Activated CD4-positive, alpha-beta T cell treated with anti-CD3 and anti-CD28 coated beads for 36 hours (primary cell): ENCODE measurements at regions of chr10 and their contacts with region 1.

Region 1: GRCh38 chr10:104268716-104269645 is at the start of gene GSTO2:
- DNase-seq: peak; percentile 99
- ATAC-seq: peak; percentile 90
- H3K4me3 Mint-ChIP-seq: peak within 1 kb of the TSS; percentile 77
- H3K27ac Mint-ChIP-seq: peak within 1 kb of the TSS; percentile 94
- H3K4me1 Mint-ChIP-seq: peaks cover 42% of the 10 kb centered on the region
- H3K27me3 Mint-ChIP-seq: no peaks in the 10 kb centered on the region
- total RNA-seq, gene GSTO2: 2.1 to 2.8 TPM

Region 2: GRCh38 chr10:103396064-103396788 is 872.8 kb before region 1 on chr10 and contains the starts of genes ATP5MK and PDCD11:
- CTCF ChIA-PET with region 1: no interaction called
- POLR2A ChIA-PET with region 1: no interaction called
- intact Hi-C with region 1: loop called in 1 of 2 experiments (anchors 2 kb)
- DNase-seq: peak; percentile 98
- ATAC-seq: peak; percentile 100
- H3K4me3 Mint-ChIP-seq: peak within 1 kb of the TSS; percentile 99
- H3K27ac Mint-ChIP-seq: peak within 1 kb of the TSS; percentile 95
- H3K4me1 Mint-ChIP-seq: peaks cover 57% of the 10 kb centered on the region
- H3K27me3 Mint-ChIP-seq: no peaks in the 10 kb centered on the region
- total RNA-seq, gene ATP5MK: 377 to 447 TPM
- total RNA-seq, gene PDCD11: 60.6 to 73.8 TPM

Region 3: DNA sequence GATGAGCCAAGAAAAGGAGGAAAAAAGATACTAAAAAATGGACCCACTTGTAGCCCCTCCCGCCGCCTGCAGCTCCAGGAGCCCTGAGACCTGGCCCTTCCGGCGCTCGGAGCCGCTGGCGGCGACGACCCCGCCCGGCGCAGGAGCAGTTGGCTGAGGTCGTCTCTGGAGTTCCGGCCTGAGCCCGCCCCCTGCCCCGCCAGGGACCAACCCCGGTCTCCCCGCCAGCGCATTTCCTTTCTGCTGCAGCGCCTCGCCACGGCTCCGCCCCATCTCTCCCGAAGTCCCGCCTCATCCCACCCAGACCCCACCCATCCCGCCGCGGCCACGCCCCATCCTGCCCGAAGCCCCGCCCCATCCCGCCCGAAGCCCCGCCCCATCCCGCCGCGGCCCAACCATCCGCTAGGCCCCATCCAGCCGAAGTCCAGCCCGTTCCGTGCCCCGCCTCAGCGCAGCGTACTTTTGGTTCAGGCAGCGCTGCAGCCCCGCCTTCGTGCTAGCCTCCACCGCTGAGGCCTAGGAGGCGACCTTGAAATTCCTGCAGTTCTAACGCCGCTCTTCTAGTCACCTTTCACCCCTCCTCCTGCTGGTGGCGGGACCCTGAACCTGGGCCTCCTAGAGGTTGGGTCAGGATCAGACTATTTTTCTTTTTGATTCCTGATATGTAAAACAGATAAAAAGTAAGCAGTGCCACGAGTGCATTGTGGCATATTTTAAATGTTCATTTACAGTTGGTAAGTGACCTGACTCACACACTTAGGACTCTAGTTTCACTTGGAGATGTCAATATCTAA is 350.7 kb before region 1 on chr10 and contains the start of gene STN1:
- CTCF ChIA-PET with region 1: no interaction called
- POLR2A ChIA-PET with region 1: no interaction called
- intact Hi-C with region 1: loop called (anchors 1 to 2 kb)
- DNase-seq: peak; percentile 98
- ATAC-seq: peak; percentile 93
- H3K4me3 Mint-ChIP-seq: peak within 1 kb of the TSS; percentile 96
- H3K27ac Mint-ChIP-seq: peak within 1 kb of the TSS; percentile 99
- H3K4me1 Mint-ChIP-seq: peaks cover 32% of the 10 kb centered on the region
- H3K27me3 Mint-ChIP-seq: no peaks in the 10 kb centered on the region
- total RNA-seq, gene STN1: 34.4 to 37.4 TPM

Region 4: DNA sequence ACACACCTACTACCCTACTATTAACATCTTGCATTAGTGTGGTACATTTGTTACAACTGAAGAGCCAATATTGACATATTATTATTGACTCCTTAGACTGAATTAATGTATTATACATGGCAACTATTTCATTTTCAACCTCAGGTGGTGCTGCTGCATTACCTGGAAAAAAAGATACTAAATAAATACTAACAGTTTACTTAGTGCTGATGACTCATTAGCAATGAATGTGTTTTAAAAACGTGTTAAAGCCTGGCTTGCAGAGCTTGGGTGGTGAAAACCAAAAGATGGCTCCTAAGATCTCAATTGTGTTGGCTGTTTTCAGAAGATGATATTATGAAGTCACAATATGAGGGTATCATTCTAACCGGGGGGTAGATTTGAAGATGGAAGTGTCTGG is 71.6 kb before region 1 on chr10:
- CTCF ChIA-PET with region 1: no interaction called
- POLR2A ChIA-PET with region 1: no interaction called
- intact Hi-C with region 1: no loop called
- DNase-seq: no peak
- ATAC-seq: no peak
- H3K4me3 Mint-ChIP-seq: no peak overlapping the region
- H3K27ac Mint-ChIP-seq: no peak overlapping the region
- H3K4me1 Mint-ChIP-seq: no peaks in the 10 kb centered on the region
- H3K27me3 Mint-ChIP-seq: peaks cover 4% of the 10 kb centered on the region

Region 5: GRCh38 chr10:104231784-104232612 is 37.0 kb before region 1 on chr10 and contains the start of gene CFAP43:
- CTCF ChIA-PET with region 1: interaction called, 5 read pairs
- POLR2A ChIA-PET with region 1: interaction called, 3 read pairs
- intact Hi-C with region 1: loop called (anchors 1 kb)
- DNase-seq: peak; percentile 100
- ATAC-seq: peak; percentile 100
- H3K4me3 Mint-ChIP-seq: peak within 1 kb of the TSS; percentile 78
- H3K27ac Mint-ChIP-seq: peak within 1 kb of the TSS; percentile 21
- H3K4me1 Mint-ChIP-seq: peaks cover 5% of the 10 kb centered on the region
- H3K27me3 Mint-ChIP-seq: peaks cover 13% of the 10 kb centered on the region
- total RNA-seq, gene CFAP43: 0.09 TPM

Region 6: DNA sequence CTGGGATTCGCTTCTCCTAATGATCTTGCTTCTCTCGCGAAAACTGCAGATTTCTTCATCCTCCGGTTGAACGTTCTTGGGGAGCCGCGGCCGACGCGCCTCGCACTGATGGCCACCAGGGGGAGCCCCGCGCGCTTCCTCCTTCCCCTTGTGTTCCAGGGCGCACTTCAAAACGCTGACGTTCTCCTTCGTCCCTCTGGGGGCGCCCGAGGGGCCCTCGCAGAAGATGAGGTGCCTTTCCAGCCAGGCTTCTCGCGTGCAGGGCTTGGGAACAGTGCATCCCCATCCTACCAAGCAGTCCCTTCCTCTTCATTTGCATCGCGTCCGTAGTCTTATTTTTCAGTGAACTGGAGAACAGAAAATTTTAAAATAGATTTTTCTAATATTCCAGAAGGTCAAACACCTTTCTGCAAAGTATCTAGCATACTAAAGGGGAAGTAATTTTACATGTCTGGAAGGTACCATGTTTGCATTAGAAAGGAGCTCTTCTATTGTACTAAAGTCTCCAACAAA is 22.5 kb after region 1 on chr10:
- CTCF ChIA-PET with region 1: interaction called, 115 read pairs
- POLR2A ChIA-PET with region 1: no interaction called
- intact Hi-C with region 1: loop called in 1 of 2 experiments (anchors 2 kb)
- DNase-seq: peak; percentile 94
- ATAC-seq: peak; percentile 99
- H3K4me3 Mint-ChIP-seq: no peak overlapping the region
- H3K27ac Mint-ChIP-seq: no peak overlapping the region
- H3K4me1 Mint-ChIP-seq: peaks cover 19% of the 10 kb centered on the region
- H3K27me3 Mint-ChIP-seq: peaks cover 15% of the 10 kb centered on the region

Region 7: DNA sequence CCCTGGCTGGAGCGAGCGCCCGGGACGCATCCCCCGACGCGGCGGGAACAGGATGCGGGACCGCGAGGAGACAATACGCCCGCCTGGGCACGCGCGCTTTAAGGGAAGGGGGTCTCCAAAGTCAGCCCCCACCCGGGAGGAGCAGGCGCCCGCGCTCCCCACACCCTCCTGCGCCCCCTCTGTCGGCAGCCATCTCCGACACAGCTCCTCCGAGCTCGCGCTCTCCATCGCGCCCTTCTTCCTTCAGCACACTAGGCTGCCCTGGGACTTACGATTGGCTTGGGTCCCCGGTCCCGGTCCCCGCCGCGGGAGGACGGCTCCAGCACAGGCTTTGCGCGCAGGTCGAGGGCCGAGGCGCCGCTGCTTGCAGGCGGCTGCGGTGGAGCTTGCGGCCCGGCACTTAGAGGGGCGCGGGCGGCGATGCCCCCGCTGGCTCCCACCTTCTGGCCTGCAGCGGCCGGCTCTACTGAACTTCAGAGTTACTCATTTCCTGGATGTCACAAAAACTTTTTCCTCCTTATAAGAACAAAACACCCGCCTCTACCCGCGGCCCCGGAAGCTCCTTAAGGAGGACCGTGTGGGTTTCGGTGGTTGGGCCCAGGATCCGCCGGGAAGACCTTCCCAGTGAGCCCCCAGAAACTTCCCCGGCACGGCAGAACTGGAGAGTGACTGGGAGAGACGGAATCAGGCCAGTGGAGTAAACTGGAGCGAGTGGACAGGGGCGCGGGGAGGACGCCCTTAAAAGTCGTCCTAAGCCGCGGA is 69.2 kb after region 1 on chr10 and contains the start of gene ITPRIP:
- CTCF ChIA-PET with region 1: interaction called, 16 read pairs
- POLR2A ChIA-PET with region 1: no interaction called
- intact Hi-C with region 1: loop called (anchors 1 kb)
- DNase-seq: peak; percentile 82
- ATAC-seq: peak; percentile 78
- H3K4me3 Mint-ChIP-seq: peak within 1 kb of the TSS; percentile 93
- H3K27ac Mint-ChIP-seq: peak within 1 kb of the TSS; percentile 99
- H3K4me1 Mint-ChIP-seq: peaks cover 45% of the 10 kb centered on the region
- H3K27me3 Mint-ChIP-seq: no peaks in the 10 kb centered on the region
- total RNA-seq, gene ITPRIP: 20.3 to 21.6 TPM